HepG2 (cell line): ENCODE measurements at regions of chr16 and their contacts with region 1.

Region 1: GRCh38 chr16:53773150-53773846 is 69.3 kb downstream of the FTO start:
- DNase-seq: peak; percentile 81
- ATAC-seq: peak; percentile 86
- H3K4me3 ChIP-seq: peak overlapping the region in 2 of 3 experiments; percentile 12 to 15; a peak in 2 of 6 replicates
- H3K27ac ChIP-seq: peak overlapping the region; percentile 5
- H3K4me1 ChIP-seq: peaks cover 73% of the 10 kb centered on the region
- H3K27me3 ChIP-seq: no peaks in the 10 kb centered on the region
- CTCF ChIP-seq: peak; percentile 92
- EP300 ChIP-seq: no peak
- POLR2A ChIP-seq: no peak
- RAD21 ChIP-seq: peak; percentile 90

Region 2: GRCh38 chr16:53549970-53550690 is 223.2 kb before region 1 on chr16:
- CTCF ChIA-PET with region 1: no interaction called
- POLR2A ChIA-PET with region 1: no interaction called
- in situ Hi-C with region 1: no loop called
- intact Hi-C with region 1: loop called (anchors 10 kb)
- DNase-seq: peak; percentile 69
- ATAC-seq: peak; percentile 83
- H3K4me3 ChIP-seq: no peak overlapping the region
- H3K27ac ChIP-seq: no peak overlapping the region
- H3K4me1 ChIP-seq: peaks cover 26% of the 10 kb centered on the region
- H3K27me3 ChIP-seq: peaks cover 0 to 25% of the 10 kb centered on the region in 2 experiments
- CTCF ChIP-seq: peak; percentile 95
- EP300 ChIP-seq: no peak
- POLR2A ChIP-seq: no peak
- RAD21 ChIP-seq: peak; percentile 87

Region 3: DNA sequence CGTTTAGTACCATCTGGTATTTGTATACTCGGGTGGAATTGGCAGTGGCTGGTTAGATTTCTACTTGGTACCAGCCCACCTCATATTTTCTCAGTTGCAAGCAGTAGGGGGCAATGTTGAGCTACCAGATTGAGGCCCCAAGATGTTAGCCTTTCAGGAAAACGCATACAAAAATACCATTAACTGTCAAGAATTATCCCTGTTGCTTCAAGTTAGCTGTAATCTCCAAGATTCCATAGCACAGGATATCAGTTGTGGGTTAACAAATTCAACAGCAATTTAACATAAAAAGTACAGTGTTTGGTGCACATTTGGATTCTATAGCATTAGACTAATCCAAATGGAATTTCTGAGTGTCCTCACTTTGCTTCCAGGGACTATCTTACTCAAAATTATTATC is 118.9 kb after region 1 on chr16:
- CTCF ChIA-PET with region 1: interaction called, 3 read pairs
- POLR2A ChIA-PET with region 1: no interaction called
- in situ Hi-C with region 1: no loop called
- intact Hi-C with region 1: loop called (anchors 1 kb)
- DNase-seq: peak; percentile 61
- ATAC-seq: peak; percentile 87
- H3K4me3 ChIP-seq: no peak overlapping the region
- H3K27ac ChIP-seq: no peak overlapping the region
- H3K4me1 ChIP-seq: peaks cover 26% of the 10 kb centered on the region
- H3K27me3 ChIP-seq: no peaks in the 10 kb centered on the region
- CTCF ChIP-seq: peak; percentile 87
- EP300 ChIP-seq: 0 out of 4 replicates have a peak, but pooled peaks of 1 of the 2 experiments have one; percentile 38
- POLR2A ChIP-seq: no peak
- RAD21 ChIP-seq: peak; percentile 77

Region 4: GRCh38 chr16:54171626-54172525 is 398.6 kb after region 1 on chr16:
- CTCF ChIA-PET with region 1: no interaction called
- POLR2A ChIA-PET with region 1: interaction called, 8 read pairs
- in situ Hi-C with region 1: loop called (anchors 25 kb)
- intact Hi-C with region 1: loop called (anchors 1 kb)
- DNase-seq: peak; percentile 46
- ATAC-seq: no peak
- H3K4me3 ChIP-seq: peak overlapping the region in 1 of 3 experiments; percentile 49; a peak in 2 of 6 replicates
- H3K27ac ChIP-seq: peak overlapping the region; percentile 65
- H3K4me1 ChIP-seq: peaks cover 77% of the 10 kb centered on the region
- H3K27me3 ChIP-seq: no peaks in the 10 kb centered on the region
- CTCF ChIP-seq: no peak
- EP300 ChIP-seq: 0 out of 4 replicates have a peak, but pooled peaks of 1 of the 2 experiments have one; percentile 18
- POLR2A ChIP-seq: peak in 1 of 2 experiments; percentile 44; a peak in 1 of 4 replicates
- RAD21 ChIP-seq: no peak

Region 5: GRCh38 chr16:54193665-54194333 is 420.5 kb after region 1 on chr16:
- CTCF ChIA-PET with region 1: no interaction called
- POLR2A ChIA-PET with region 1: no interaction called
- in situ Hi-C with region 1: loop called (anchors 25 kb)
- intact Hi-C with region 1: no loop called
- DNase-seq: peak; percentile 58
- ATAC-seq: peak; percentile 95
- H3K4me3 ChIP-seq: no peak overlapping the region
- H3K27ac ChIP-seq: no peak overlapping the region
- H3K4me1 ChIP-seq: peaks cover 28% of the 10 kb centered on the region
- H3K27me3 ChIP-seq: no peaks in the 10 kb centered on the region
- CTCF ChIP-seq: peak; percentile 97
- EP300 ChIP-seq: no peak
- POLR2A ChIP-seq: no peak
- RAD21 ChIP-seq: peak; percentile 90

Region 6: DNA sequence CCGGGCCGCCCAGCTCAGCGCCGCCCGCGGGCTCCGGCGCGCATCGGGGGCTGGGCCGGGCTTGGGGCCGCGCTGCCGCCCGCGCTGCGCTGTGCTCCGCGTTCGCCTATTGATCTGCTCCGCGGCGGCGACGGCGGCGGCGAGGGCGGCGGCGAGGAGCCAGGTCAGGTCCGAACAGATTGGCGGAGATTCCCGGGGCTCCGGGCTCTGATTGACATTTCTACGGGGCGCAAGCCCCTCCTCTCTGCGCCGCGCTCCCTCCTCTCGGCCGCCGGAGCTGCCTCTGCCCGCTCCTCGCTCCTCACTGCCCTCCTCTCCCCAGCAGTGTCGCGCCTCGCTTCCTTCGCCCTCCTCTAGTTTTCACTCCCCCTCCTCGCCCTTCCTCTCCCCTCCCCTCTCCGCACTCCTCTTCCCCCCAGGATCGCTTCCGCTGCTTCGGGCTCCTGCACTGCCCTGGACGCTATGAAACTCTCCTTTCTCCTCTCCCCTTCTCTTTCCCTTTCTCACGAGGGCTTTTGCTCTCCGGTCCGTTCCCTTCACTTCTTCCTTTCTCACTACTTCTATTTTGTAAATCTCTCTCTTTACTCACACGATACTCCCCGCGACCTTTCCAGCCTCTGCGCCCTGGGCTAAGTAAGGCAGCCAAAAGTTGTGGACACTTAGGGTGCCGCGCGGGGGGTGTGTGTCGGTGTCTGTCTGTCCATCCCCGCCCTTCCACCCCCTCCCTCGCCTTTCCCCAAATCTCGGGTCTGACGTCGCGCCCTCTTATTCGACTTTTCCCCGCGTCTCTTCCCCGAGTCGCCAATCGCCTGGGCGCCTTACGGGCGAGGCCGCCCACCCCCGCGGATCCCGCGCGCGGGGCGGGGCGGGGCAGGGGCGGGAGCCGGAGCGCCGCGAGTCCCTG is 513.0 kb after region 1 on chr16 and contains the start of gene IRX3:
- CTCF ChIA-PET with region 1: no interaction called
- POLR2A ChIA-PET with region 1: interaction called, 3 read pairs
- in situ Hi-C with region 1: loop called (anchors 10 kb)
- intact Hi-C with region 1: loop called (anchors 5 kb)
- DNase-seq: peak; percentile 91
- ATAC-seq: peak; percentile 74
- H3K4me3 ChIP-seq: peak within 1 kb of the TSS; percentile 87 to 98 (median 88)
- H3K27ac ChIP-seq: peak within 1 kb of the TSS; percentile 91
- H3K4me1 ChIP-seq: peaks cover 16% of the 10 kb centered on the region
- H3K27me3 ChIP-seq: no peaks in the 10 kb centered on the region
- CTCF ChIP-seq: peak; percentile 26; the same call in 1 of the 2 replicates
- EP300 ChIP-seq: no peak
- POLR2A ChIP-seq: peak; percentile 65 to 67
- RAD21 ChIP-seq: no peak; the same call in 1 of the 2 replicates
- total RNA-seq, gene IRX3: 10.0 and 16.4 TPM in 2 replicates

Region 7: DNA sequence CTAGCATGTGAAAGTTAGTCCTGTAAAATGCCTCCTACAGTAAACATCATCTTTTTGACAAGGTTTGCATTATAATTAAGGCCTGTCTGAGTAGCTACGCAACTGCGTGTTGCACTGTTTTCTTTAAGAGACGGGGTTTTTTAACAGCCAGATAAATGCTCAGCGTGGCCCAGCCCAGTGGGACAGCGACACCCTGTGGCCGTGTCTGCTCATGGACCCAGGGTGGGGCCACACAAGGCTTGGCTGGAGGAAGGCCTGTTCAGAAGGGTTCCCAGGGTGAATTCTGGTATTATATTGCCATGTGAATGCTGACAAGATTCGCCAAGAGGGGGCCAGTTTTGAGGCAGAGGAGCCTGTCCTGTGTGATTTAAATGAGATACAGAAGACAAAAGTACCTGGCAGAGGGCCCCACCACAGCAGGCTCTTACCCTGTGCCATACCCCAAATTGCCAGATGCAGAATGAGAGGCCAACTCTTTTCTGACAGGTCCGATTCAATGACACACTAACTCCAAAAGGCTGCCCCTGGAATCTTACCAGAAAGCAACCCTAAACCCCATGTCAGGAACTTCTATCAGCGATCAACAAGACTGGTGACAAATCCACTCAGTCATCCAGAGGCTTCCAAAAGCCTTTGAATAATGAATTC is 1484.8 kb after region 1 on chr16:
- CTCF ChIA-PET with region 1: interaction called, 4 read pairs
- POLR2A ChIA-PET with region 1: no interaction called
- in situ Hi-C with region 1: no loop called
- intact Hi-C with region 1: loop called (anchors 1 kb)
- DNase-seq: peak; percentile 41
- ATAC-seq: peak; percentile 97
- H3K4me3 ChIP-seq: no peak overlapping the region
- H3K27ac ChIP-seq: no peak overlapping the region
- H3K4me1 ChIP-seq: no peaks in the 10 kb centered on the region
- H3K27me3 ChIP-seq: no peaks in the 10 kb centered on the region; a peak in 2 of 5 replicates
- CTCF ChIP-seq: peak; percentile 78
- EP300 ChIP-seq: no peak
- POLR2A ChIP-seq: no peak
- RAD21 ChIP-seq: peak; percentile 84